CD4-positive, alpha-beta memory T cell (primary cell): ENCODE measurements at regions of chr11 and their contacts with region 1.

Region 1: GRCh38 chr11:62705880-62706849 is 1.1 kb downstream of the BSCL2 start:
- DNase-seq: peak; percentile 90 to 95 (median 91)
- H3K4me3 ChIP-seq: peak overlapping the region; percentile 69 to 86
- H3K4me3 Mint-ChIP-seq: peak overlapping the region; percentile 86 to 95 (median 89)
- H3K27ac ChIP-seq: peak overlapping the region; percentile 78
- H3K27ac Mint-ChIP-seq: peak overlapping the region; percentile 91 to 98 (median 94)
- H3K4me1 ChIP-seq: peaks cover 50% of the 10 kb centered on the region
- H3K4me1 Mint-ChIP-seq: peaks cover 21 to 51% (median 36%) of the 10 kb centered on the region in 4 donors
- H3K27me3 ChIP-seq: no peaks in the 10 kb centered on the region
- H3K27me3 Mint-ChIP-seq: no peaks in the 10 kb centered on the region

Region 2: GRCh38 chr11:62601394-62602140 is 104.6 kb before region 1 on chr11 and contains the start of gene MTA2:
- CTCF ChIA-PET with region 1: no interaction called
- POLR2A ChIA-PET with region 1: interaction called, 20 read pairs
- intact Hi-C with region 1: loop called (anchors 1 kb)
- DNase-seq: peak; percentile 99 to 100 (median 100)
- H3K4me3 ChIP-seq: peak within 1 kb of the TSS; percentile 71 to 82
- H3K4me3 Mint-ChIP-seq: peak within 1 kb of the TSS; percentile 91 to 99 (median 96)
- H3K27ac ChIP-seq: peak within 1 kb of the TSS; percentile 91
- H3K27ac Mint-ChIP-seq: peak within 1 kb of the TSS; percentile 90 to 99 (median 98)
- H3K4me1 ChIP-seq: peaks cover 35% of the 10 kb centered on the region
- H3K4me1 Mint-ChIP-seq: peaks cover 33 to 60% (median 46%) of the 10 kb centered on the region in 4 donors
- H3K27me3 ChIP-seq: no peaks in the 10 kb centered on the region
- H3K27me3 Mint-ChIP-seq: no peaks in the 10 kb centered on the region
- total RNA-seq, gene MTA2: 207 to 210 TPM

Region 3: GRCh38 chr11:62645956-62646824 is 60.0 kb before region 1 on chr11 and contains the start of gene GANAB:
- CTCF ChIA-PET with region 1: no interaction called
- POLR2A ChIA-PET with region 1: interaction called, 22 read pairs
- intact Hi-C with region 1: loop called (anchors 1 kb)
- DNase-seq: peak; percentile 95 to 99 (median 97)
- H3K4me3 ChIP-seq: peak within 1 kb of the TSS; percentile 55 to 76
- H3K4me3 Mint-ChIP-seq: peak within 1 kb of the TSS; percentile 93 to 99 (median 95)
- H3K27ac ChIP-seq: peak within 1 kb of the TSS; percentile 92
- H3K27ac Mint-ChIP-seq: peak within 1 kb of the TSS; percentile 84 to 99 (median 97)
- H3K4me1 ChIP-seq: peaks cover 37% of the 10 kb centered on the region
- H3K4me1 Mint-ChIP-seq: peaks cover 14 to 48% (median 26%) of the 10 kb centered on the region in 4 donors
- H3K27me3 ChIP-seq: no peaks in the 10 kb centered on the region
- H3K27me3 Mint-ChIP-seq: no peaks in the 10 kb centered on the region
- total RNA-seq, gene GANAB: 260 to 262 TPM

Region 4: GRCh38 chr11:62678770-62679696 is 27.1 kb before region 1 on chr11 and contains the start of gene UBXN1:
- CTCF ChIA-PET with region 1: interaction called, 7 read pairs
- POLR2A ChIA-PET with region 1: interaction called, 14 read pairs
- intact Hi-C with region 1: loop called (anchors 1 kb)
- DNase-seq: peak; percentile 80 to 90 (median 82)
- H3K4me3 ChIP-seq: peak within 1 kb of the TSS; percentile 58 to 95
- H3K4me3 Mint-ChIP-seq: peak within 1 kb of the TSS; percentile 87 to 98 (median 92)
- H3K27ac ChIP-seq: peak within 1 kb of the TSS; percentile 98
- H3K27ac Mint-ChIP-seq: peak within 1 kb of the TSS; percentile 86 to 99 (median 95)
- H3K4me1 ChIP-seq: peaks cover 37% of the 10 kb centered on the region
- H3K4me1 Mint-ChIP-seq: peaks cover 16 to 50% (median 31%) of the 10 kb centered on the region in 4 donors
- H3K27me3 ChIP-seq: no peaks in the 10 kb centered on the region
- H3K27me3 Mint-ChIP-seq: no peaks in the 10 kb centered on the region
- total RNA-seq, gene UBXN1: 178 to 185 TPM

Region 5: DNA sequence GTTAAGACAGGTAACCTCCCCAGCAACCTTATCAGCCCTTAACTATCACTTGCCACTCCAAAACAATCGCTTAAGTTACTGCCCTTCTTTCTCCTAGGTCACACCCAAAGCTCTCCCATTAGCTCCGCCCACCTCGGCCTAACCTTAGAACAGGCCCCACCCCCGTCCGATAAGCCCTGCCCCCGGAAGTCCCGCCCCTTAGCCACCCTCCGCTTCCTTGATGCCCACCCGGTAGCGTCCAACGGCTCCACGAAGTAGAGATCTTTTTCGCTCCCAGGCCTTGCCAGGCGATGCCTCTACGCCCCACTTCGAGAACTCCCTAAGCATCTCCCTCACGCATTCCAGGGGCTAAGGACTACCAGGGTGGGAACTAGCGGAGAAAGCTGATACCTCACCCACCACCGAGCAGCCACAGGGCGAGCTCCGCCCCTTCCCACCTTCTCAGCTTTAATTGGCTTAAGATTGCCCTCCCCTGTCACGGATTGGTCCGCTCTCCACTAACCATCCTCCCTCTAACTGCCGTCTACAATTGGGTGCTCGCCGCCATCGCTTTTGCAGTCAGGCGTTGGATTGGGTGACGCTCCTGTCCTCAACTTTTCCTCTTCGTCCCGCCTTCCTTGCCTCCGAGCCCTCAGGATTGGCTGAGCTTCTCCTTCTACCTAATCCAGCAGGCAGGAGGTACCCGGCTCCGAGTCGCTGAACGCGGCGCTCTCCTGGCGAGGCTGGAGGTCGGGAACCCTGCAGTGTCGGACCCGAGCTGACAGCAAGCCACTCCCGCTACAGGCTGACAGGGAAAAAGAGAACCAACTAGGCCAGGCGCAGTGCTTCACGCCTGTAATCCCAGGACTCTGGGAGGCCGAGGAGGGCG is 47.8 kb after region 1 on chr11 and contains the start of gene ZBTB3:
- CTCF ChIA-PET with region 1: no interaction called
- POLR2A ChIA-PET with region 1: interaction called, 68 read pairs
- intact Hi-C with region 1: loop called (anchors 1 kb)
- DNase-seq: peak; percentile 99
- H3K4me3 ChIP-seq: peak within 1 kb of the TSS; percentile 68 to 98
- H3K4me3 Mint-ChIP-seq: peak within 1 kb of the TSS; percentile 96 to 99 (median 98)
- H3K27ac ChIP-seq: peak within 1 kb of the TSS; percentile 90
- H3K27ac Mint-ChIP-seq: peak within 1 kb of the TSS; percentile 94 to 100 (median 99)
- H3K4me1 ChIP-seq: peaks cover 45% of the 10 kb centered on the region
- H3K4me1 Mint-ChIP-seq: peaks cover 15 to 41% (median 25%) of the 10 kb centered on the region in 4 donors
- H3K27me3 ChIP-seq: no peaks in the 10 kb centered on the region
- H3K27me3 Mint-ChIP-seq: no peaks in the 10 kb centered on the region
- total RNA-seq, gene ZBTB3: 27.2 to 27.9 TPM

Region 6: GRCh38 chr11:62831520-62832335 is 125.6 kb after region 1 on chr11 and contains the start of gene STX5:
- CTCF ChIA-PET with region 1: no interaction called
- POLR2A ChIA-PET with region 1: interaction called, 12 read pairs
- intact Hi-C with region 1: loop called (anchors 2 kb)
- DNase-seq: peak; percentile 99 to 100 (median 100)
- H3K4me3 ChIP-seq: peak within 1 kb of the TSS; percentile 82 to 85
- H3K4me3 Mint-ChIP-seq: peak within 1 kb of the TSS; percentile 94 to 100 (median 98)
- H3K27ac ChIP-seq: peak within 1 kb of the TSS; percentile 97
- H3K27ac Mint-ChIP-seq: peak within 1 kb of the TSS; percentile 94 to 100 (median 99)
- H3K4me1 ChIP-seq: peaks cover 30% of the 10 kb centered on the region
- H3K4me1 Mint-ChIP-seq: peaks cover 21 to 59% (median 41%) of the 10 kb centered on the region in 4 donors
- H3K27me3 ChIP-seq: no peaks in the 10 kb centered on the region
- H3K27me3 Mint-ChIP-seq: no peaks in the 10 kb centered on the region
- total RNA-seq, gene STX5: 66.0 to 67.9 TPM

Region 7: GRCh38 chr11:62880803-62881578 is 174.8 kb after region 1 on chr11 and contains the start of gene SLC3A2:
- CTCF ChIA-PET with region 1: interaction called, 3 read pairs
- POLR2A ChIA-PET with region 1: interaction called, 10 read pairs
- intact Hi-C with region 1: no loop called
- DNase-seq: peak; percentile 85 to 89 (median 88)
- H3K4me3 ChIP-seq: peak within 1 kb of the TSS; percentile 96 to 98
- H3K4me3 Mint-ChIP-seq: peak within 1 kb of the TSS; percentile 93 to 100 (median 100)
- H3K27ac ChIP-seq: peak within 1 kb of the TSS; percentile 93
- H3K27ac Mint-ChIP-seq: peak within 1 kb of the TSS; percentile 93 to 100 (median 99)
- H3K4me1 ChIP-seq: peaks cover 52% of the 10 kb centered on the region
- H3K4me1 Mint-ChIP-seq: peaks cover 26 to 60% (median 41%) of the 10 kb centered on the region in 4 donors
- H3K27me3 ChIP-seq: no peaks in the 10 kb centered on the region
- H3K27me3 Mint-ChIP-seq: no peaks in the 10 kb centered on the region
- total RNA-seq, gene SLC3A2: 205 to 215 TPM

Region 8: GRCh38 chr11:63251312-63251711 is 545.1 kb after region 1 on chr11:
- CTCF ChIA-PET with region 1: no interaction called
- POLR2A ChIA-PET with region 1: no interaction called
- intact Hi-C with region 1: no loop called
- DNase-seq: no peak
- H3K4me3 ChIP-seq: no peak overlapping the region
- H3K4me3 Mint-ChIP-seq: no peak overlapping the region
- H3K27ac ChIP-seq: no peak overlapping the region
- H3K27ac Mint-ChIP-seq: no peak overlapping the region
- H3K4me1 ChIP-seq: no peaks in the 10 kb centered on the region
- H3K4me1 Mint-ChIP-seq: no peaks in the 10 kb centered on the region
- H3K27me3 ChIP-seq: peaks cover 4% of the 10 kb centered on the region
- H3K27me3 Mint-ChIP-seq: peaks cover 5 to 7% of the 10 kb centered on the region in 2 donors